Uterus (tissue), 4 donors: ENCODE measurements at regions of chr3 and their contacts with region 1.

Region 1: GRCh38 chr3:128080320-128081080 is 28.3 kb downstream of the SEC61A1 start:
- DNase-seq: no peak
- H3K4me3 ChIP-seq: no peak overlapping the region
- H3K27ac ChIP-seq: no peak overlapping the region
- H3K4me1 ChIP-seq: peaks cover 0 to 11% of the 10 kb centered on the region in 2 donors
- H3K27me3 ChIP-seq: no peaks in the 10 kb centered on the region
- CTCF ChIP-seq: no peak
- POLR2A ChIP-seq: no peak

Region 2: DNA sequence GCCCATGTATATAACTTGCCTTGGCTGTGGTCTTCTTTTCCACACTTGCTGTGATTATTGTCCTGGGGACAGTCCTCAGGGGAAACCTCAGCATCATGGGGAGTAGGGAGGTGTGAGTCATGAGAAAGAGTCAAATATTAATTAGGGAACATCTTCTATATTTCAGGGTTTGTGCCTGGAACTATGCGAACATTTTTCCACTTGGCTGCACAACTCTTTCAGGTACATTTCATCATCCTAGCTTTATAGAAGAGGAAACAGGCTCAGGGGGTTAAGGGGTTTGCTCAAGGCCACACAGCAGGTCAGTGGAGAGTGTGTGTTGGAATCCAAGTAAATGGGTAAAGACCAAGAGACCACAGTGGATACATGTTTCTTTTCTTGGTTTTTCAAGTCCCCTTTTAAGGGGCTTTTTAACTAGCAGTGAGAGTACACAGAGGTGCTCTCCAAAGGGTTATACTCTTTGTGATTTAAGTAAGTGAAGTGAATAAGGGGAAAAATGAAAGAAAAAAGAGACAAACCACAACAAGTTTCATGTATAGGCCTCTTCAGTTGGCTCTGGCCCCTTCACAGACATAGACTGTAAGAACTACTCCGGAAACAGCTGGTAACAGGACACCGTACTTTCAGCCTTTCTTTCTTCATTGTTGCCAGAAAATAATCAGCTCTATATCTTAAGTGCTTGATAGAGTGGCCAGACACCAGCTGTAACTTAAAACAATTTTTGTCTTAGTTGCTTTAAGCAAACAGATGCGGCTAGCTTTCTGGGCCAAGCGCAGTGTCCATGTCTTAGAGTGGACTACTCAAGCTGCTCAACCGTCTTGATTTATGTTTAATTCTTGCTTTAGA is 137.4 kb after region 1 on chr3:
- intact Hi-C with region 1: no loop called
- DNase-seq: no peak
- H3K4me3 ChIP-seq: no peak overlapping the region
- H3K27ac ChIP-seq: no peak overlapping the region
- H3K4me1 ChIP-seq: no peaks in the 10 kb centered on the region
- H3K27me3 ChIP-seq: no peaks in the 10 kb centered on the region
- CTCF ChIP-seq: no peak
- POLR2A ChIP-seq: no peak

Region 3: DNA sequence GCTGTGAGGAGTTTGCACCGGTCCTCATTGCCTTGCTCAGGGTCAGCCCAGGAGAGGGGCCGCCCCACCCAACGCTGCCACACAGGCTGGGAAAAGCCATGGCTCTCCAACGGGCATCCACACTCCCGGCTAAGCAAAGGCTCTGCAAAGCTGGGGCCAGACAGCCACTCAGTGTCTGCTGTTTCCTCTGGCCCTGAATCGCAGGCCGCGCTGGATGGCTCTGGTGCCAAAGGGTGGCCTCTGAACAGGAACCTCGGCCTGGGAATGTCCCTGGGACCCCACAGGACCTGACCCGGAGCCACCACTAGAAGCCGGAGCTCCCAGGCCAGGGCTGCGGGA is 527.2 kb after region 1 on chr3:
- intact Hi-C with region 1: loop called (anchors 10 kb)
- DNase-seq: no peak
- H3K4me3 ChIP-seq: peak overlapping the region; percentile 44 to 45
- H3K27ac ChIP-seq: peak overlapping the region; percentile 44 to 66
- H3K4me1 ChIP-seq: no peaks in the 10 kb centered on the region
- H3K27me3 ChIP-seq: no peaks in the 10 kb centered on the region
- CTCF ChIP-seq: no peak
- POLR2A ChIP-seq: no peak